Gastrocnemius medialis (tissue), 4 donors: ENCODE measurements at regions of chr18 and their contacts with region 1.

Region 1: GRCh38 chr18:2706903-2707302 is 51.4 kb downstream of the SMCHD1 start:
- DNase-seq: no peak
- ATAC-seq: no peak
- H3K4me3 ChIP-seq: no peak overlapping the region
- H3K27ac ChIP-seq: no peak overlapping the region
- H3K4me1 ChIP-seq: no peaks in the 10 kb centered on the region
- H3K27me3 ChIP-seq: no peaks in the 10 kb centered on the region
- CTCF ChIP-seq: no peak
- POLR2A ChIP-seq: no peak

Region 2: GRCh38 chr18:2641638-2642037 is 65.3 kb before region 1 on chr18:
- in situ Hi-C with region 1: no loop called
- intact Hi-C with region 1: no loop called
- DNase-seq: no peak
- ATAC-seq: peak in 1 of 2 donors; percentile 28
- H3K4me3 ChIP-seq: peak overlapping the region in 1 of 4 donors; percentile 14
- H3K27ac ChIP-seq: peak overlapping the region in 3 of 4 donors; percentile 20 to 55 (median 47)
- H3K4me1 ChIP-seq: peaks cover 0 to 3% of the 10 kb centered on the region in 2 donors
- H3K27me3 ChIP-seq: no peaks in the 10 kb centered on the region
- CTCF ChIP-seq: no peak
- POLR2A ChIP-seq: no peak

Region 3: GRCh38 chr18:2787225-2787624 is 80.3 kb after region 1 on chr18:
- in situ Hi-C with region 1: no loop called
- intact Hi-C with region 1: loop called (anchors 10 kb)
- DNase-seq: no peak
- ATAC-seq: no peak
- H3K4me3 ChIP-seq: no peak overlapping the region
- H3K27ac ChIP-seq: no peak overlapping the region
- H3K4me1 ChIP-seq: no peaks in the 10 kb centered on the region
- H3K27me3 ChIP-seq: no peaks in the 10 kb centered on the region
- CTCF ChIP-seq: no peak
- POLR2A ChIP-seq: no peak